A673 (cell line): ENCODE measurements at regions of chr1 and their contacts with region 1.

Region 1: GRCh38 chr1:176434234-176434633 is 28.7 kb upstream of the PAPPA2 start:
- DNase-seq: no peak
- H3K4me3 ChIP-seq: no peak overlapping the region
- H3K27ac ChIP-seq: no peak overlapping the region
- H3K4me1 ChIP-seq: no peaks in the 10 kb centered on the region
- H3K27me3 ChIP-seq: no peaks in the 10 kb centered on the region
- CTCF ChIP-seq: no peak

Region 2: GRCh38 chr1:175839678-175840669 is 594.3 kb before region 1 on chr1:
- CTCF ChIA-PET with region 1: no interaction called
- POLR2A ChIA-PET with region 1: no interaction called
- intact Hi-C with region 1: no loop called
- DNase-seq: no peak
- H3K4me3 ChIP-seq: no peak overlapping the region
- H3K27ac ChIP-seq: no peak overlapping the region
- H3K4me1 ChIP-seq: no peaks in the 10 kb centered on the region
- H3K27me3 ChIP-seq: peaks cover 4% of the 10 kb centered on the region
- CTCF ChIP-seq: no peak

Region 3: DNA sequence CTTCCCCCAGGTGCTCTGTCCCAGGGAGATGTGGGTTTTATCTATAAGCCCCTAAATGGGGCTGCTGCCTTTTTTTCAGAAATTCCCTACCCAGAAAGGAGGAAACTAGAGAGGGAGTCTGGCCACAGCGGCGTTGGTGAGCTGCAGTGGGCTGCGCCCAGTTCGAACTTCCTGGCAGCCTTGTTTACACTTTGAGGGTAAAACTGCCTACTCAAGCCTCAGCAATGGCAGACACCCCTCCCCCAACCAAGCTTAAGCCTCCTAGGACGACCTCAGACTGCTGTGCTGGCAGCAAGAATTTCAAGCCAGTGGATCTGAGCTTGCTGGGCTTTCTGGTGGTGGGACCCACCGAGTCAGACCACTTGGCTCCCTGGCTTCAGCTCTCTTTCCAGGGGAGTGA is 17.5 kb before region 1 on chr1:
- CTCF ChIA-PET with region 1: no interaction called
- POLR2A ChIA-PET with region 1: interaction called, 10 read pairs
- intact Hi-C with region 1: no loop called
- DNase-seq: no peak
- H3K4me3 ChIP-seq: no peak overlapping the region
- H3K27ac ChIP-seq: no peak overlapping the region
- H3K4me1 ChIP-seq: no peaks in the 10 kb centered on the region
- H3K27me3 ChIP-seq: no peaks in the 10 kb centered on the region
- CTCF ChIP-seq: no peak

Region 4: DNA sequence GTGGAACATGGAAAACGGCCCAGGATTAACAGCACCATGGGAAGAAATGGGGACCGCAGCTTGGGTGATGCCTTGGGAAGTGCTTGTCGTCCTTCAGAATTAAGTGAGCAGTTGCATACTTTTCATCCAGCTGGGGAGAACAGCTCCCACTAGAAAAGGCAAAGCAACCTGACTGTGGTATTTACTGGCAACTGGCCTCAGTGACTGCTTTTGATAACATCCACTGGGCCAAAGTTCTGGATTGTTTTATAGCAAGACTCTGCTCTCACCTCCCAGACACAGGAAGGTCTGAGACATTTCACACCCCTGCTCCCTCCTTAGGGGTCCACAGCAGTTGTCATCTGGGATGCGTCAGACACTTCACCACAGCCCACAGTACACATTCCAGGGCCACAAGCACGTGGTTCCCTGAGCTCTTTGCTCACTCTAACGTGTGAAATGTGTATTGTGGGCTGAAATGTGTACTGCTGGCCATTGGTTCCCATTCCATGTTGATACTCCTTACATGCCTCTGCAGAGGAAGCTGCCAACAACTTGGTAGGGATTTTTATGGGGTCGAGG is 35.3 kb after region 1 on chr1:
- CTCF ChIA-PET with region 1: no interaction called
- POLR2A ChIA-PET with region 1: no interaction called
- intact Hi-C with region 1: no loop called
- DNase-seq: no peak
- H3K4me3 ChIP-seq: no peak overlapping the region
- H3K27ac ChIP-seq: no peak overlapping the region
- H3K4me1 ChIP-seq: no peaks in the 10 kb centered on the region
- H3K27me3 ChIP-seq: no peaks in the 10 kb centered on the region
- CTCF ChIP-seq: no peak